Posterior vena cava (tissue), 2 donors: ENCODE measurements at regions of chr1 and their contacts with region 1.

Region 1: DNA sequence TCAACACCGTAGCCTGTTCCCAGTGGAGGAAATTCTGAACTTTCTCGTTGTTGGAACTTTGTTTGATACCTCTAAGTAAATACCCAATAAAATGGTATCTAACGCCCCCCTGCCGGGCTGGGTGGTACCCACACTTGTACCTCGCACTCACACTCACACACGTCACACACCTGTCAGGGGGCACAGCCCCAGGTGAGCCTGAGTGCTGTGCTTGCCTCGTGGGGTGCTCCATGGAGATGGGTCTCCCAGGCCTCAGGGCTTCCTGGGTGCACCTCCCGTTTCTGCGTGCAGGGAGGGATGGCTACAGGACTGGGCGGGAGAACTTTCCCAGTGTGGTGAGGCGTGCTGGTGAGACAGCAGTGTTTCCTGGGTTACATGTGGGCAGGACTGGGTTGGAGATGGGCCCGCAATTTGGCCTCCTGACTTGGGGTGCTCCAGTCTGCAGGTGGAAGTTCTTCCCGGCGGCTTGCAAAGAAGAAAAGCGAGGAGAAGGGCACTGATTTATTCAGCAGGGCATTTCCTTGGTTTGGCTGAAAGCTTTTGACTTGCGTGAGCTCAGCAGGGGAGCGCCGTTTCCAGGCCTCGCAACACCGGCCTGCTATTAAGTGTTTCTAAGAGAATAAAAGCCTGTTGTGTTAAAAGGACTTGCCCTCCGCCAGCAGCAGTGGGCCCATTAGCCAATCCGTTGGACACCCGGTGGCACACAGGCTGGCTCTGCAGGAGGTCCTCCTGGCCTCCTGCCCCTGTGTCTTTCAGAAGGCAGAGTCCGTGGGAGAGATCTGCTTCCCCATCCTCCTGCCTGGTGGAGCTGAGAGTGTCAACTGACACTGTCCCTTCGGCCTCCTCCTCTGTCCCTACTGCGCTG is 79.7 kb downstream of the KIF26B start:
- DNase-seq: peak; percentile 55

Region 2: GRCh38 chr1:245060684-245061374 is 173.6 kb before region 1 on chr1:
- intact Hi-C with region 1: no loop called
- DNase-seq: no peak

Region 3: GRCh38 chr1:245258271-245258920 is 23.9 kb after region 1 on chr1:
- intact Hi-C with region 1: loop called in 1 of 2 experiments (anchors 1 kb)
- DNase-seq: no peak